ENCODE measurements at regions of chr2 and their contacts with region 1.

Region 1: DNA sequence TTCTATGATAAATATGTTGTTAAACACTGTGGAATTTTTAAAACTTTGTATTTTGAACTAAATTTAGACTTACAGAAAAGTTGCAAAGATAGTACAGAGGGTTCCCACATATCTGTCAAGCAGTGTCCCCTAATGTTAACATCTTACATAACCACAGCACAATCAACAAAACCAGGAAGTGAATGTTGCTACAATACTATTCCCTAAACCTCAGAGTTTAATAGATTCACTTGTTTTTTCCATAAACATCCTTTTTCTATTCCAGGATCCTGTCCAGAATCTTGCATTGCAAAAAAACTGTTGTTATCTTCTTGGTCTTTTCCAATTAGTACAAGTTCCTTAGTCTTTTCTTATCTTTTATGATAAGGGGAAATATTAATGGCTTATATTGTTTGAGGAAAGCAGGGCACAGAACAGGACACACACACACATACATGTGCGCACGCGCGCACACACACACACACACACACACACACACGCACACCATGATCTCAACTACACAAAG is 251.1 kb upstream of the TRIB2 start:
- DNase-seq: no peak
- ATAC-seq: no peak
- H3K4me3 ChIP-seq: no peak overlapping the region
- H3K4me3 Mint-ChIP-seq: no peak overlapping the region
- H3K27ac ChIP-seq: no peak overlapping the region
- H3K27ac Mint-ChIP-seq: peak overlapping the region; percentile 12 to 83
- H3K4me1 ChIP-seq: peaks cover 0 to 4% of the 10 kb centered on the region in 2 experiments
- H3K4me1 Mint-ChIP-seq: peaks cover 10 to 29% (median 15%) of the 10 kb centered on the region in 3 donors
- H3K27me3 ChIP-seq: no peaks in the 10 kb centered on the region
- H3K27me3 Mint-ChIP-seq: no peaks in the 10 kb centered on the region

Region 2: DNA sequence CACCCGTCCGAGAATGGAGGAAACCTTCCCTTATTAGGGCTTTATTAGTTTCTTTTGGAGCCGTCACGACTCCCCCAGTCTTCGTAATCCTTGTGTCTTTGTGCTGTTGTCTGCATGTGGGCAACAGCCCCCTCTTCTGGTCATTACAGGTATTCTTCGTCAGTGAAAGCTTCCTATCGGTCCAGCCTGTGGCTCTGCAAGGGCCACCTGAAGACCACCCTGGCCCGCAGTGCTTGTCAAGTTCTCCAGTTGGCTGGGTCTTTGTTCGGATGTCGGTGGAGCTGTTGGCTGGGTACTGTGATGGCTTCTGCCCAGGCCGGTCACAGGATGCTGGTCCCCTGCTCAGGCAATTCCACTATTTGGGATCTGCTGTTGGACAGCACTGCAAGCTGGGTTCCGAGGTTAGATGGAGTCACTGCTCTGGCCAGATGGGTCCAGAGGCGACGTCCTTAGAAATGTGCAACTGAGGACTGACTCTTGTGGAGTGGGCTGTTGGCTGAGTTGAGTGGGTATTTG is 1018.9 kb before region 1 on chr2:
- CTCF ChIA-PET with region 1: no interaction called
- POLR2A ChIA-PET with region 1: no interaction called
- DNase-seq: peak in 33 of 35 experiments; percentile 8 to 76 (median 34)
- ATAC-seq: peak; percentile 29 to 65 (median 56)
- H3K4me3 ChIP-seq: no peak overlapping the region
- H3K4me3 Mint-ChIP-seq: no peak overlapping the region
- H3K27ac ChIP-seq: no peak overlapping the region
- H3K27ac Mint-ChIP-seq: no peak overlapping the region
- H3K4me1 ChIP-seq: no peaks in the 10 kb centered on the region
- H3K4me1 Mint-ChIP-seq: no peaks in the 10 kb centered on the region
- H3K27me3 ChIP-seq: no peaks in the 10 kb centered on the region
- H3K27me3 Mint-ChIP-seq: no peaks in the 10 kb centered on the region

Region 3: GRCh38 chr2:12515871-12516270 is 50.2 kb after region 1 on chr2:
- CTCF ChIA-PET with region 1: no interaction called
- POLR2A ChIA-PET with region 1: interaction called in 1 of 2 experiments, 10 read pairs
- DNase-seq: no peak
- ATAC-seq: no peak
- H3K4me3 ChIP-seq: no peak overlapping the region
- H3K4me3 Mint-ChIP-seq: peak overlapping the region in 1 of 3 donors; percentile 73
- H3K27ac ChIP-seq: peak overlapping the region; percentile 12
- H3K27ac Mint-ChIP-seq: peak overlapping the region; percentile 66 to 85
- H3K4me1 ChIP-seq: peaks cover 24 to 39% of the 10 kb centered on the region in 2 experiments
- H3K4me1 Mint-ChIP-seq: peaks cover 48 to 66% (median 63%) of the 10 kb centered on the region in 3 donors
- H3K27me3 ChIP-seq: no peaks in the 10 kb centered on the region
- H3K27me3 Mint-ChIP-seq: no peaks in the 10 kb centered on the region

Region 4: GRCh38 chr2:12613137-12613835 is 147.6 kb after region 1 on chr2:
- CTCF ChIA-PET with region 1: no interaction called
- POLR2A ChIA-PET with region 1: interaction called in 1 of 2 experiments, 10 read pairs
- DNase-seq: no peak
- ATAC-seq: no peak
- H3K4me3 ChIP-seq: no peak overlapping the region
- H3K4me3 Mint-ChIP-seq: no peak overlapping the region
- H3K27ac ChIP-seq: no peak overlapping the region
- H3K27ac Mint-ChIP-seq: peak overlapping the region in 1 of 2 donors; percentile 62
- H3K4me1 ChIP-seq: peaks cover 0 to 2% of the 10 kb centered on the region in 2 experiments
- H3K4me1 Mint-ChIP-seq: peaks cover 9 to 20% (median 13%) of the 10 kb centered on the region in 3 donors
- H3K27me3 ChIP-seq: no peaks in the 10 kb centered on the region
- H3K27me3 Mint-ChIP-seq: no peaks in the 10 kb centered on the region

Measured in T-cell (primary cell).